ENCODE measurements at regions of chr3 and their contacts with region 1.

Region 1: DNA sequence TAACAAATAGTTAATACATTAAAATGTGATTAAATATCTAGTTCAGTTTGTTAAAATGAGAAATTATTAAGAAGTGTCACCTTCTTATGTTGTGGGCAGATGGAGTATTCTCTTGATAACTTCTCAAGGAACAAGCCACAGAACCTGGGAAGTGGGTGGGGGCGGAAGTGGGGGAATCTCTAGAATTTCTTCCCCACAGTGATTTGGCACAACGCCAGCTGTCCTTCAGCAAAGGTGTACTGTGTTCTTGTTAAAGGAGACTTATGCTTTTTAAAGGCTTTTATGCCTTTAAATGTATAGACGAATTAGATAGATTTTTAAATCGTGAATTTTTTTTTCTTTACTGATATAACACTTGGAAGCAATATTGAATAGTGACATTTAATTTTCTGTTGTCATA is 42.4 kb downstream of the SEC22A start:
- DNase-seq: no peak
- H3K4me3 ChIP-seq: no peak overlapping the region
- H3K27ac ChIP-seq: no peak overlapping the region
- H3K4me1 ChIP-seq: peaks cover 0 to 3% (median 0%) of the 10 kb centered on the region in 4 donors
- H3K27me3 ChIP-seq: no peaks in the 10 kb centered on the region
- CTCF ChIP-seq: no peak
- EP300 ChIP-seq: no peak
- POLR2A ChIP-seq: no peak

Region 2: GRCh38 chr3:123275691-123276090 is 31.6 kb after region 1 on chr3:
- in situ Hi-C with region 1: no loop called
- intact Hi-C with region 1: loop called (anchors 2 kb)
- DNase-seq: no peak
- H3K4me3 ChIP-seq: no peak overlapping the region
- H3K27ac ChIP-seq: no peak overlapping the region
- H3K4me1 ChIP-seq: no peaks in the 10 kb centered on the region
- H3K27me3 ChIP-seq: no peaks in the 10 kb centered on the region
- CTCF ChIP-seq: no peak
- EP300 ChIP-seq: no peak
- POLR2A ChIP-seq: no peak